OCI-LY7 (cell line): ENCODE measurements at regions of chr2 and their contacts with region 1.

Region 1: DNA sequence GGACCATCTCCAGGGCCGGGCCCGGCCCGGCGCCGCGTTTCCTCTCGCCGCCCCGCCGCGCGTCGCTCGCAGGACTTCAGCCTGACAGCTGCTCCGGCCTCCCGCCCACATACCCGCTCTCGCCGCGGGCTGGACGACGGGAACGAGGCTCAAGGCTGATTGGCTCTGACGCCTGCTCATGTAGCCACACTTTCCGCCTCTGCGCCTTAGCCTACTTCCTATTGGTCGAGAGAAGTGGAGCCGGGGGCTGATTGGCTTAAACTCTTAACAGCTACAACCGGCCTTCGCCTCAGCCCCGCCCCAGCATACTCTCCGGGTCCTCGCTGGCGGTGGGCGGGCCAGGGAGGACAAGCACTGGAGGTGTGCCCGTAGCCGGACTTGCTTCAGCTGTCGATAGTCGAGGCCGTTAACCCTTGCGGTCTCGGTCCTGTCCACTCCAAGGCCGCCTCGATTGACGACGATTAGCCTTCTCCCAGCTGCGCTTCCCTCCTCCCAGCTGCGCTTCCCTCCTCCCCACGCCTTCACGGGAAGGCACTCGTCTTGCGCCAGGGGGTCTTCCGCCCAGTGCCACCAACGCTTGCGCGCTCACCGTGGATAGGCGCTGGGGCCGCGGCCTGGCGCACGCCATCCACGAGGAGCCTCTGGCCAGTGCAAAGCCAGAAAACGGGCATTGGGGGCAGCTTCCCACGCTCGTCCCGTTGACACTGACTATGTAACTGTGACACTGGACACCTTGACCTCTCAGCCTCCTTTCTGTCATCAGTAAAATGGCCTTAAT is at the start of gene PRADC1:
- DNase-seq: peak; percentile 99
- H3K4me3 ChIP-seq: peak within 1 kb of the TSS; percentile 93
- H3K27ac ChIP-seq: peak within 1 kb of the TSS; percentile 78
- H3K4me1 ChIP-seq: peaks cover 27% of the 10 kb centered on the region
- CTCF ChIP-seq: no peak
- total RNA-seq, gene PRADC1: 25.3 and 25.9 TPM in 2 replicates

Region 2: GRCh38 chr2:73385595-73386341 is 152.4 kb after region 1 on chr2 and contains the start of gene ALMS1:
- CTCF ChIA-PET with region 1: no interaction called
- POLR2A ChIA-PET with region 1: interaction called, 4 read pairs
- intact Hi-C with region 1: loop called (anchors 1 kb)
- DNase-seq: peak; percentile 96
- H3K4me3 ChIP-seq: peak within 1 kb of the TSS; percentile 89
- H3K27ac ChIP-seq: peak within 1 kb of the TSS; percentile 84
- H3K4me1 ChIP-seq: peaks cover 18% of the 10 kb centered on the region
- CTCF ChIP-seq: 0 out of 2 replicates have a peak, but pooled peaks have one; percentile 24
- total RNA-seq, gene ALMS1: 57.8 and 58.7 TPM in 2 replicates

Region 3: GRCh38 chr2:73489053-73489452 is 255.7 kb after region 1 on chr2:
- CTCF ChIA-PET with region 1: no interaction called
- POLR2A ChIA-PET with region 1: no interaction called
- intact Hi-C with region 1: no loop called
- DNase-seq: no peak
- H3K4me3 ChIP-seq: no peak overlapping the region
- H3K27ac ChIP-seq: no peak overlapping the region
- H3K4me1 ChIP-seq: no peaks in the 10 kb centered on the region
- CTCF ChIP-seq: no peak